Activated naive CD4-positive, alpha-beta T cell treated with anti-CD3 and anti-CD28 coated beads, Interleukin-2, amount 10 ng/mL, durations not matched to agents 7 days and 5 days (primary cell): ENCODE measurements at regions of chr4 and their contacts with region 1.

Region 1: DNA sequence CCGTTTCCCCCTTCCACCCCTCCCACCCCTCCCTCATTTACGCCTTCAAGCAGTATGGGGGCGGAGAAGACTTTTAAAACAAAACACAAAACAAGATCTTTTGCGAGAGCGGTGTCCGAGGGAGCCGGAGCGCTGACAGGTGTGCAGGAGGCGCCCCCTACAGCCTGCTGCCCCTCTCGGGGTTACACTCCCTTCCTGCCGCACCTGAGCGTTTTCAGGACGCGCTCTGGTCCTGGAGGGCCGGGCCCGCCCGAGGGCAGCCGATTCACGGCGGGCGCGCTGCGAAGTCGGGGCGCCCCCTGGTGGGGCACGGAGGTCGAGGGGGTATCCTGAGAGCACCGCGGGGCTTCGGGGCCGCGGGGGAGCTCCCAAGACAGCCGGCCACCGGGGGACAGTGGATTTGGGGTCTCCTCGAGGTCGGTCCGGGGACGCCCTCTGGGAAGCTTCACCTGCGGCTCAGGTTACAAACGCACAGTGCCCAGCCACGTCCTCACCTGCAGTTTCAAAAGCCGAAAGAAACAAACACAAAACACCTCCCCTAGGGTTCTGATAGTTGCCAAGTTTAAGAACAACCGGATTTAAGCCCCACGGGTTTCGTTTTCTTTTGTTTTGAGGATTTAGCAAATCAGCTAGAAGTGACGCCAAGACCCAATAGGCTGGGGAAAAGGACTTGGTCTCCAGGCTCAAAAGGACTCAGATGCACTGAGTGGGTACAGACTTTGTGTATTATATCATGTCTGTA is 8.0 kb upstream of the NEUROG2 start:
- DNase-seq: peak; percentile 83
- H3K4me3 Mint-ChIP-seq: peak overlapping the region; percentile 73
- H3K27ac Mint-ChIP-seq: no peak overlapping the region
- H3K4me1 Mint-ChIP-seq: peaks cover 44% of the 10 kb centered on the region
- H3K27me3 Mint-ChIP-seq: peaks cover 74% of the 10 kb centered on the region

Region 2: DNA sequence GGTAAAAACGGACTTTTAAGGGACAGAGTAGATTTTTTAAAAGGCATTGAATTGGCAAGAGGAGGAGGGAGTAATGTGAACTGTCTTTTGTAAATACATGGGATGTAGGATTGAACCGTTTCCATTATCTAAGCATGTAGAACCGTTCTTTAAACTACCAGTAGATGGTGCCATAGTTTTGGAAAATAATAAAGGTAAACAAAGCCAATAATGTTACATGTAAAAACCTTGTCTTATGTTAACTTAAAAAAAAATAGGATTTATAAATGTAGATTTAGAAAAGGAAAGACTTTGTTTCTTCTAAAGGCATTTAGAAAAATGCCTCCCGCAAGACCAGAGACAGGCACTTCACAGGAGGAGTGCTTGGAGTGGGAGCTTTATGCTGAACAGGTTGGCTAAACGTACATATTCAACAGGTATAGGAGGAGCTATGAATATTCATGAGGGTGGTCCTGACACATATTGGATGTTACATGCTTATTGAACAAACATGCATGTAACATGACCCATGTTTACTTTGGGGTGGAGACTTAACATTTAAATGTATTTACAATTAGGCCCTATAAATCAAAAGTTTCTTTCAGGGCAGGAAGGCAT is 424.1 kb before region 1 on chr4:
- CTCF ChIA-PET with region 1: interaction called, 10 read pairs
- DNase-seq: no peak
- H3K4me3 Mint-ChIP-seq: no peak overlapping the region
- H3K27ac Mint-ChIP-seq: no peak overlapping the region
- H3K4me1 Mint-ChIP-seq: peaks cover 2% of the 10 kb centered on the region
- H3K27me3 Mint-ChIP-seq: no peaks in the 10 kb centered on the region

Region 3: DNA sequence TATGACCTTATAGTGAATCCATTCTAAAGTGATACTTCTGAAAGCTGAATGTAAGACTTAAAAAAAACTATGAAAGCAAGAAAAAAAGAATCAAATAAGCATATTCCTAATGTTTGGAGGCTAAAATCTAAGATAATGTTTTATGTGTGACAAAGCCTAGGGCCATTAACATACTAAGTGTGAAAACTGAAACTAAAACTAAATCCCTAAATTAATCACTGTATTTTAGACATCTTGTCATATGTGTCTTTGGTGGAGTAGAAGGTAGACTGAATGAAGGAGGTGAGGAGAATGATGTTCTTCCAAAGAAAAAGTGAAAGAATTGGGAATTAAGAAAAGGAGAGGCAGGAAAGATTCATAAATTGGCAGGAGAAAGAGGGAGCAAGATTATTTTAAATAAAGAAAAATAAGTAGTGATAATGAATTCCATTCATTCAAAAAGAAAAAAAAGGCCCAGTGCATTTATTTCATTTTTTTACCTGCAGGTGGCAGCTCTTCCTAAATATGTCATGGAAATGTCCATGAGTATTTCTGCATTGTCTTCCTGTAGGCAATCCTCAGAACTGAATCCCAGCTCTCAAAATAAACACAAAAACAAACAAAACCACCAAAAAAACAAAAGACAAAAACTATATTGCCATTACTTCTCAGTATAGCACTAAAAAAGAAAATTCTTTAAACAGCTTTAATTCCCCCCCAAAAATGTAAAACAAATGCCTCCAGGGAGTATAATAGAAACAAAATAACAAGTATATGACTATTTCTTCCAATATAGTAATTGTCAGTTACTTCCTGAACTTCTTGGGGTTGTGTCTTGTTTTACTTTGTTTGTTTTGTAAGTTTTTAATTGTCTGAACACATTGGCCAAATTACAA is 309.3 kb before region 1 on chr4:
- CTCF ChIA-PET with region 1: interaction called, 11 read pairs
- DNase-seq: no peak
- H3K4me3 Mint-ChIP-seq: no peak overlapping the region
- H3K27ac Mint-ChIP-seq: no peak overlapping the region
- H3K4me1 Mint-ChIP-seq: peaks cover 5% of the 10 kb centered on the region
- H3K27me3 Mint-ChIP-seq: peaks cover 6% of the 10 kb centered on the region

Region 4: GRCh38 chr4:112327965-112328733 is 195.8 kb before region 1 on chr4:
- CTCF ChIA-PET with region 1: interaction called, 12 read pairs
- DNase-seq: no peak
- H3K4me3 Mint-ChIP-seq: no peak overlapping the region
- H3K27ac Mint-ChIP-seq: no peak overlapping the region
- H3K4me1 Mint-ChIP-seq: no peaks in the 10 kb centered on the region
- H3K27me3 Mint-ChIP-seq: no peaks in the 10 kb centered on the region

Region 5: DNA sequence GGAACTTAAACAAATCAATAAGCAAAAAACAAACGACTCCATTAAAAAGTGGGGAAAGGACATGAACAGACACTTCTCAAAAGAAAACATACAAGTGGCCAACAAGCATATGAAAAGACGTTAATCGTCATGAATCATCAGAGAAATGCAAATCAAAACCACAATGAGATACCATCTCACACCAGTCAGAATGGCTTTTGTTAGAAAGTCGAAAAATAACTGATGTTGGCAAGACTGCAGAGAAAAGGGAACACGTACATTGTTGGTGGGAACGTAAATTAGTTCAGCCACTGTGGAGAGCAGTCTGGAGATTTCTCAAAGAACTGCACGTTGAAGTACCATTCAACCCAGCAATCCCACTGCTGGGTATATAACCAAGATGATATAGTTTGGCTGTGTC is 31.6 kb before region 1 on chr4:
- CTCF ChIA-PET with region 1: no interaction called
- DNase-seq: no peak
- H3K4me3 Mint-ChIP-seq: no peak overlapping the region
- H3K27ac Mint-ChIP-seq: no peak overlapping the region
- H3K4me1 Mint-ChIP-seq: no peaks in the 10 kb centered on the region
- H3K27me3 Mint-ChIP-seq: peaks cover 4% of the 10 kb centered on the region

Region 6: DNA sequence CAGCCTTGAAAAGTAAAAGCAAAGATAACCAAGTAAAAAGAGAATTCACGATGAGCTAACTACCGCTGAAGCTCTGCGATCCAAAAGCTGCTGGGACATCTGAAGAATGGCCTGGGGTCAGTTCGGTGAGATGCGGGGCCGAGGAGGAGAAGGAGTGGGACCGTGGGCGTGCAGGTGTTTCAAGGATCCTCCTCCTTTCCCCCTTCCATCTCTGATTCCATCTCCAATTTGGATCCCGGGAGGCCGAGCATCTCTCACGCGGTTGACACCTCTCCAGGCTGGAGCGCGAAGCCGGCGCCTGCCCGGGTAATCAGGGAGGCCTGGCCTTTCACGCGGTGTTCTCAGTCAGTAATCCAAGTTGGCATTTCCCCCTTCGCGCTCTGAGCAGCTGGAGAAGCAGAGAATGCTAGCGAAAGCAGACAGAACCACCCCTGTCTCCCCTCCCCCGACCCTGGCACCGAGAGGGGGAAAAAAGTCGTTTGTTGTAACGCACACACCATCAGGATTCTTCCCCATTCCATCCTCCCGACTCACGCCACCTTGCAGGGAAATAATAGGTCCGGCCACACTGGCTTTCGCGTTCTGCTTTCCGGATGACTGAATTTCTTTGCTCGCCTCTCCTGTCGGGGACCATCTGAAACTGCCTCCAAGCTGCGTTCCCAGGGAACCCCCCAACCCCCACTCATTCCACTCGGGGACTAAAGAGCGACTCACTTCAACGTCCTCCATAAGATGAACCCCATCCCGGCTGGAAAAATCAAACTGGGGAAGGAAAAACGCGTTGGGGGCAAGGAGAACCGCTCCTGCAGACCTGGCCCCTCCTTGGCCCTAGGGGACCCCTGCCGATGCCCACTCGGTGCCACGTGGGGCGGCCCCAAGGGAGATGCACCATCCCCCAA is 14.4 kb before region 1 on chr4:
- CTCF ChIA-PET with region 1: interaction called, 16 read pairs
- DNase-seq: peak; percentile 27
- H3K4me3 Mint-ChIP-seq: peak overlapping the region; percentile 37
- H3K27ac Mint-ChIP-seq: no peak overlapping the region
- H3K4me1 Mint-ChIP-seq: peaks cover 38% of the 10 kb centered on the region
- H3K27me3 Mint-ChIP-seq: peaks cover 90% of the 10 kb centered on the region

Region 7: DNA sequence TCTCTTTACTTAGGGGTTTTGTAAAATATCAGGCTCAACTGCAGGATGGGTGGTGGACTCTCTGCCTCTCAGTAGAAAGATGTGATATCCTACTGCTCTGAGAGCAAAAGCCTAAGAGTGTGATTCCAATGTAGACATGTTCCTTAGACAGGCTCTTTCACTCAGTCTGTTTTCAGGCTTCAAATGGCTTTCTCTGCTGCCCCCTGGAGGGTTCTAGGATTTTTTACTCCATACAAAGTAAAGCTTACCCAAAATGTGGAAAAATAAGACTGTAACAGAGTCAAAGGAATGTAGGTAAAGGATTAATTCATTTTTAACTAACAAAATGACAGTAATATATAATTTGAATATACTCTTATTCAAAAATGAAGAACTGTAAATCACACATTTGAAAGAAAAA is 80.7 kb after region 1 on chr4:
- CTCF ChIA-PET with region 1: interaction called, 15 read pairs
- DNase-seq: peak; percentile 55
- H3K4me3 Mint-ChIP-seq: no peak overlapping the region
- H3K27ac Mint-ChIP-seq: no peak overlapping the region
- H3K4me1 Mint-ChIP-seq: no peaks in the 10 kb centered on the region
- H3K27me3 Mint-ChIP-seq: no peaks in the 10 kb centered on the region